ENCODE measurements at regions of chr10 and their contacts with region 1.

Region 1: DNA sequence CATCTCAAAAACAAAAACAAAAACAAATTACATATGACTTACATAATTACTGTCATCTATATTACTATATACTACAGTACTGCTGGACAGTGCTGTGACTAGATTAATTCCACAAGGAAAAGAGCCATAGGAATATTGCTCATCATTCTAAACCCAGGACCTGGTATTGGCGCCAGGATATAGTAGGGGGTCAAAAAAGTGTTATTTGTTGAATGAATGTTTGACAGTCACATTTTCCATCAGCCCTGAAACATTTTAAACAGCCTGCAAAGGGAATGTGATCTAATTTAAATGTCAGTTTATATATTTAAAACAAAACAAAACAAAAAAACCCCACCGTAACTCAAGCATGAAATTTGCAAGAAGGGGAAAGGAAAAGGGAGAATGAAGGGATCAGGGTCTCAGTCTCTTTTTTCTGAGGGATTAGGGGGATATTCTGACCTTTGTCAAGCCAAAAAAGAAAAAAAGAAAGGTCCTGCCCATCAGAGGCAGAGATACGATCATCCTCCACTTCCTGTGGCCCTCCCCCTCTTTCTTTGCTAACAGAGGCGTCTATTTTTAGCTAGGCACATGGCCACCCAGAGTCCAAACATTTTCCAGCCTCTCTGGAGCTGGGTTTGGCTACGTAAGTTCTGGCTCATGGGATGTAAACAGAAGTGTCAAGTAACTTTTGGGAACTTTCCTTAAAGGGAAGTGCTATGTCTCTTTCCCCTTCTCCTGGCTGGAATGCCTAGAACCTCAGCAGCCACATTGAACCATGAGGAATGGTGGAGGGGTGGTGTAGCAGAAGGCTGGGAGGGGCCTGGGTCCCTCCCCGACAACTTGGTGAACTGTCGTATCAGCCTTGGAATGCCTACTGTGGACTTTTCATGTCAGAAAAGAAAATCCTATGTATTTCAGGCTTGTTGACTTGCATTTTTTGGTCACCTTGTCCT is 44.6 kb upstream of the DLG5 start:
- DNase-seq: peak in 1 of 3 donors; percentile 65
- ATAC-seq: peak; percentile 67
- H3K4me3 ChIP-seq: no peak overlapping the region
- H3K4me1 ChIP-seq: peaks cover 7% of the 10 kb centered on the region
- CTCF ChIP-seq: no peak

Region 2: GRCh38 chr10:77846718-77847630 is 124.2 kb before region 1 on chr10:
- intact Hi-C with region 1: loop called in 1 of 2 experiments (anchors 10 kb)
- DNase-seq: peak; percentile 72 to 87 (median 86)
- ATAC-seq: peak; percentile 73
- H3K4me3 ChIP-seq: no peak overlapping the region
- H3K4me1 ChIP-seq: peaks cover 24% of the 10 kb centered on the region
- CTCF ChIP-seq: peak; percentile 96

Region 3: GRCh38 chr10:78109210-78109609 is 138.1 kb after region 1 on chr10:
- intact Hi-C with region 1: no loop called
- DNase-seq: no peak
- ATAC-seq: no peak
- H3K4me3 ChIP-seq: no peak overlapping the region
- H3K4me1 ChIP-seq: no peaks in the 10 kb centered on the region
- CTCF ChIP-seq: no peak

Region 4: GRCh38 chr10:78777466-78777865 is 806.3 kb after region 1 on chr10:
- intact Hi-C with region 1: no loop called
- DNase-seq: peak in 1 of 3 donors; percentile 19
- ATAC-seq: peak; percentile 53
- H3K4me3 ChIP-seq: no peak overlapping the region
- H3K4me1 ChIP-seq: peaks cover 6% of the 10 kb centered on the region
- CTCF ChIP-seq: no peak

Measured in mucosa of descending colon (tissue), 3 donors.